Calu3 (cell line): ENCODE measurements at regions of chr18 and their contacts with region 1.

Region 1: GRCh38 chr18:38367473-38367872 is 801.9 kb upstream of the CELF4 start:
- DNase-seq: no peak
- H3K4me3 Mint-ChIP-seq: no peak overlapping the region
- H3K27ac Mint-ChIP-seq: no peak overlapping the region
- H3K4me1 Mint-ChIP-seq: peaks cover 50% of the 10 kb centered on the region
- H3K27me3 Mint-ChIP-seq: no peaks in the 10 kb centered on the region
- CTCF ChIP-seq: no peak

Region 2: DNA sequence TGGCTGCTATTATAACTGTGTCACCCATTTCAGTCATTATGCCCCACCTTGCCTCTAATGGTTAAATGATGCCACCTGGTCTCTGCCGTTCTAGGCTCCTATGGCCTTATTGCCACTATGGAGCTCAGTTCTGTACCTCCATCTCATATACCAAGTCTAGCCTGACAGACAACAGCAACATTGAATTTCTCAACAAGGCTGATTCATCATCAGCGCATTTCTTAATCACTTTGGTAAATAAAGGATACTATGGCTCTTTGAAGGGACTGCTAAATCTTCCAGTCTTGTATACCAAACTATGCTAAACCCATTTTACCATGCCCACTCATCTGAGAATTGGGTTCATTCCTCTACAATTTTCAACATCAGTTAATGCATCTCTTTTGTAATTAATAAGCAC is 17.3 kb before region 1 on chr18:
- CTCF ChIA-PET with region 1: no interaction called
- intact Hi-C with region 1: no loop called
- DNase-seq: no peak
- H3K4me3 Mint-ChIP-seq: no peak overlapping the region
- H3K27ac Mint-ChIP-seq: no peak overlapping the region
- H3K4me1 Mint-ChIP-seq: no peaks in the 10 kb centered on the region
- H3K27me3 Mint-ChIP-seq: no peaks in the 10 kb centered on the region
- CTCF ChIP-seq: no peak

Region 3: GRCh38 chr18:38397094-38397493 is 29.6 kb after region 1 on chr18:
- CTCF ChIA-PET with region 1: no interaction called
- intact Hi-C with region 1: no loop called
- DNase-seq: no peak
- H3K4me3 Mint-ChIP-seq: no peak overlapping the region
- H3K27ac Mint-ChIP-seq: no peak overlapping the region
- H3K4me1 Mint-ChIP-seq: peaks cover 11% of the 10 kb centered on the region
- H3K27me3 Mint-ChIP-seq: no peaks in the 10 kb centered on the region
- CTCF ChIP-seq: no peak

Region 4: GRCh38 chr18:38526922-38527321 is 159.4 kb after region 1 on chr18:
- CTCF ChIA-PET with region 1: no interaction called
- intact Hi-C with region 1: loop called (anchors 5 kb)
- DNase-seq: peak; percentile 39
- H3K4me3 Mint-ChIP-seq: peak overlapping the region; percentile 39
- H3K27ac Mint-ChIP-seq: peak overlapping the region; percentile 6
- H3K4me1 Mint-ChIP-seq: peaks cover 43% of the 10 kb centered on the region
- H3K27me3 Mint-ChIP-seq: no peaks in the 10 kb centered on the region
- CTCF ChIP-seq: no peak